ENCODE measurements at regions of chr4 and their contacts with region 1.

Region 1: DNA sequence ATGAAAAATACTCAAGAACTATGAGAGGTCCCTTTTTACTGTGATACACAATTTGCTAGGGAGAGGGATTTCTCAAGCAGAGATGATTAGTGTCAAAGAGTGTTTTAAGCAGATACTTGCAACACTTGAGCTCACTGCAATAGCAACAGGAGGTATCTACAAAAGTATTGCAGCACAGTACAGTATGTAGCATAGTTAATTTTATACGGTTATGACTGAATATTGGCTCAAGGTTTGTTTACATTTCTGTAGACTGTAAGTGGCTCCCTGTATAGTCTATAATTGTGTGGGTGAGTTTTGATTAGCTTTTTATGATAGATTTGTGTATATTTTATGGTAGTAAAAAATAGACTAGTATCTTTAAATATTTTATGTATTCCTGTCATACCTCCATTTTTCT is 1177.2 kb downstream of the TECRL start:
- DNase-seq: no peak

Region 2: GRCh38 chr4:63296773-63297172 is 64.7 kb after region 1 on chr4:
- intact Hi-C with region 1: no loop called
- DNase-seq: no peak

Region 3: GRCh38 chr4:64105903-64106302 is 873.8 kb after region 1 on chr4:
- intact Hi-C with region 1: loop called (anchors 10 kb)
- DNase-seq: no peak

Measured in cardiac septum (tissue), 1 donor.